Spleen (tissue), 13 donors: ENCODE measurements at regions of chr1 and their contacts with region 1.

Region 1: DNA sequence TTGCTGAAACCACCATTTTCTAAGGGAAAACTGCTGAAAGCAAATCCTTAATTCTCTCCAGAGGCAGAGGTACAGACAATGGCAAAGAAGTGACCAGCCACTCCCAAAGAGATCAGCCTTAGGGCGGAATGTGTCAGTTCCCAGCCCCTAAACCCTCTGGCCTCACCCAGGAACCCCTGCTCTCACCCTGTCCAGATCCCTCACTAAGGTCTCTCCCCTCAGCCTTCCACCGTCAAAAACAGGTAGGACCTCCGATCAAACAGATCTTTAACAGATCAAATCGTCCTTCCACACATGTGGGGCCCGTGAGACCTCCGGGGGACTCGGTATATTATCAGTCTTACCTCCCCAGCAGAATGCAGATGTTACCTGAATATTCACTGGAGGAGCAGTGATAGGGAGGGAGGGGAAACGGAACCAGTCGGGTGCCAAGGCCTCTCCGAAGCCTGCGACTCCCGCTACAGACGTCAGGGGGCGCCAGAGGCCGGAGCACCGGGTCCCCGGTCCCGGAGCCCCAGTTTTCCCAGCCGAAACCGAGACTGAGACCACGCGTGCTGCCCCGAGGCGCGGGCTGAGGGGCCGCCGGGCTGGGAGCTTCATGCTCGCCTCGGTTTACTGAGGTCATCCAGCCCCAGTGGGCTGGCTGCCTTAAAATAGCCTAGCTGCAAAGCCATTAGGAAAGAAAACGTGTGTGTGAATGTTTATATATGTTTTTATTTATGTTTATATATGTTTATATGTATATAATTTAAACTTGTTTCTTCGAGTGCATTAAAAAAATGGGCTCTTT is 23.6 kb downstream of the GPA33 start:
- DNase-seq: peak; percentile 96
- H3K4me3 ChIP-seq: peak overlapping the region in 3 of 8 donors; percentile 14 to 52 (median 25)
- H3K27ac ChIP-seq: no peak overlapping the region
- H3K4me1 ChIP-seq: peaks cover 0 to 11% (median 5%) of the 10 kb centered on the region in 6 donors
- H3K27me3 ChIP-seq: no peaks in the 10 kb centered on the region
- CTCF ChIP-seq: peak; percentile 74 to 99 (median 97)
- POLR2A ChIP-seq: no peak

Region 2: DNA sequence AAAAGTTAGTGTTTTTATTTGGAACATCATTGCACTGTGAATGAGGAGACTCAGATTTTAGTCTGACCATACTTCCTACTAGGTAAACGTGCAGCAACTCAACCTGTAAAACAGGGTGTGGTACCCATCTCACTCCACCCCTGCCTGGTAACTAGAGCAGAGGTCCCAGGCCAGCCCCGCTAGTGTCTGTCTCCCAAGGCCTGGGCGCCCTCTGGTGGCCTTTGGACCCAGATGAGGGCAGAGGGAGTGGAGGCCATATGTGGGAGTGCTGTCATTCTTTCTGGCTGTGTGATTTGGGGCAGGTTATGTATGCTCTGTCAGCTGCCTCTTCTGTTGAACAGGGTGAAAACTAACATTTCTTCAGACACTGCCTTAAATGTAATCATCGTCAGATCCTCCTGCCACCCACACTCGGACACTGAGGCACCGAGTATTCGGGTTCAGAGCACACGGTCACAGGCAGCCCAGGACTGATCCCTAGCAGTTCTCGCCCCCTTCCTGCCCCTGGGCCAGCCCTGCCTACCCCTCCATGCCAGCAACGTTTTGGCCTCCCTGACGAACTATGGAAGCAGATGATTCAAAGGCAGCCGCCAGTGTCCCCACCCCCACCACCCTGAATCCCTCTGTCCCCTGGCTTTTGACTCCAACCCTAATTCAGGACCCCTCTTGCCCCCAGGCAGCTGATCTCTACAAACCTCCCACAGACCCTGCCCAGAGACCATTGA is 375.8 kb after region 1 on chr1:
- intact Hi-C with region 1: loop called (anchors 5 kb)
- DNase-seq: peak; percentile 96
- H3K4me3 ChIP-seq: no peak overlapping the region
- H3K27ac ChIP-seq: peak overlapping the region in 3 of 8 donors; percentile 0 to 57 (median 28)
- H3K4me1 ChIP-seq: peaks cover 11 to 72% (median 36%) of the 10 kb centered on the region in 6 donors
- H3K27me3 ChIP-seq: peaks cover 0 to 20% (median 2%) of the 10 kb centered on the region in 7 donors
- CTCF ChIP-seq: peak; percentile 78 to 95 (median 88)
- POLR2A ChIP-seq: no peak